GM12878 (cell line): ENCODE measurements at regions of chr18 and their contacts with region 1.

Region 1: GRCh38 chr18:58180738-58181353 is 136.8 kb downstream of the NEDD4L start:
- DNase-seq: no peak
- ATAC-seq: peak; percentile 86
- H3K4me3 ChIP-seq: no peak overlapping the region
- H3K27ac ChIP-seq: no peak overlapping the region
- H3K4me1 ChIP-seq: no peaks in the 10 kb centered on the region
- H3K27me3 ChIP-seq: no peaks in the 10 kb centered on the region
- CTCF ChIP-seq: peak; percentile 78 to 87 (median 78)
- EP300 ChIP-seq: no peak
- POLR2A ChIP-seq: no peak
- RAD21 ChIP-seq: peak; percentile 79

Region 2: GRCh38 chr18:57188851-57189557 is 991.8 kb before region 1 on chr18:
- CTCF ChIA-PET with region 1: no interaction called
- POLR2A ChIA-PET with region 1: no interaction called
- RAD21 ChIA-PET with region 1: no interaction called
- SMC1A ChIA-PET with region 1: no interaction called
- in situ Hi-C with region 1: no loop called
- intact Hi-C with region 1: no loop called
- DNase-seq: no peak
- ATAC-seq: no peak
- H3K4me3 ChIP-seq: no peak overlapping the region
- H3K27ac ChIP-seq: no peak overlapping the region
- H3K4me1 ChIP-seq: no peaks in the 10 kb centered on the region
- H3K27me3 ChIP-seq: no peaks in the 10 kb centered on the region; a peak in 1 of 4 replicates
- CTCF ChIP-seq: no peak
- EP300 ChIP-seq: no peak
- POLR2A ChIP-seq: no peak
- RAD21 ChIP-seq: no peak

Region 3: GRCh38 chr18:57881818-57882413 is 298.9 kb before region 1 on chr18:
- CTCF ChIA-PET with region 1: interaction called, 15 read pairs
- POLR2A ChIA-PET with region 1: no interaction called
- RAD21 ChIA-PET with region 1: interaction called, 10 read pairs
- SMC1A ChIA-PET with region 1: interaction called, 13 read pairs
- in situ Hi-C with region 1: no loop called
- intact Hi-C with region 1: loop called (anchors 2 kb)
- DNase-seq: peak; percentile 32
- ATAC-seq: peak; percentile 98
- H3K4me3 ChIP-seq: no peak overlapping the region
- H3K27ac ChIP-seq: no peak overlapping the region
- H3K4me1 ChIP-seq: no peaks in the 10 kb centered on the region
- H3K27me3 ChIP-seq: no peaks in the 10 kb centered on the region
- CTCF ChIP-seq: peak; percentile 89 to 94 (median 90); a peak in 5 of 6 replicates
- EP300 ChIP-seq: no peak
- POLR2A ChIP-seq: no peak
- RAD21 ChIP-seq: peak; percentile 93

Region 4: GRCh38 chr18:58143386-58143785 is 37.5 kb before region 1 on chr18:
- CTCF ChIA-PET with region 1: interaction called, 10 read pairs
- POLR2A ChIA-PET with region 1: interaction called, 5 read pairs
- RAD21 ChIA-PET with region 1: no interaction called
- SMC1A ChIA-PET with region 1: interaction called, 7 read pairs
- in situ Hi-C with region 1: no loop called
- intact Hi-C with region 1: no loop called
- DNase-seq: no peak
- ATAC-seq: no peak
- H3K4me3 ChIP-seq: no peak overlapping the region
- H3K27ac ChIP-seq: no peak overlapping the region
- H3K4me1 ChIP-seq: no peaks in the 10 kb centered on the region
- H3K27me3 ChIP-seq: no peaks in the 10 kb centered on the region
- CTCF ChIP-seq: no peak
- EP300 ChIP-seq: no peak
- POLR2A ChIP-seq: no peak
- RAD21 ChIP-seq: no peak

Region 5: DNA sequence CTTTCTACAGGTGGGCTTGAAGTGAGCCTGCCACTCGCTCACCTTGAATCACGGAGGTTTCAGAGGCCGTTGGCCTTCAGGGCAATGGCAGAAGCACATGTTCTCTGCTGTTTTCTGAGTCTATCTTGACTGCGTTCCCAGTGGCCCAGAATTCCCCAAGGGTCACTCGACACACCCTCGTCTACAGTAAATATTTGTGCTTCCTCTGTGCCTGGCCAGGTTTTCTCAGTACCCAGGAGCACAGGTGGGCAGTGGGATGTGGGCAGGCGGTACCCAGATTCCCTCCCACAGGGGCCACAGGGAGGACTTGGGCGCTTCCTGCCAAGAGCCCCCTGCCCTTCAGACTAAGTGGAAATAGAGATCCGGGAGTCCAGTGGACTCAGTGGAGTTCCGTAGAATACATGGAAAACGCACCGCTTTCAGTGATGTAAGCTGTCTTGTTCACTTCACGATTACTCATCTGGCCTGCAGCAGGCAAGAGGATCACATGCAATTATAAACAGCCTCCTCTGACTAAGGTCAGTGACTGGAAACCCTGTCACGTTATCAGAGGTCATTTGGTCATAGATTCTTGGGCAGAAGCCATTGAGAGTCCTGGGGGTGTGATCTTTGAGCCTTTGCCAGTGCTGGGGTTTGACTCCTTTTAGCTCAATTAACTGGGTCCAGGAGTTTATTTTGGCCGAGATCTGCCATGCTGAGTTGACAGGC is 43.0 kb after region 1 on chr18:
- CTCF ChIA-PET with region 1: interaction called, 9 read pairs
- POLR2A ChIA-PET with region 1: no interaction called
- RAD21 ChIA-PET with region 1: interaction called, 12 read pairs
- SMC1A ChIA-PET with region 1: interaction called, 10 read pairs
- in situ Hi-C with region 1: no loop called
- intact Hi-C with region 1: no loop called
- DNase-seq: no peak
- ATAC-seq: peak; percentile 47
- H3K4me3 ChIP-seq: no peak overlapping the region
- H3K27ac ChIP-seq: no peak overlapping the region
- H3K4me1 ChIP-seq: peaks cover 13% of the 10 kb centered on the region
- H3K27me3 ChIP-seq: no peaks in the 10 kb centered on the region
- CTCF ChIP-seq: no peak
- EP300 ChIP-seq: no peak
- POLR2A ChIP-seq: no peak
- RAD21 ChIP-seq: no peak

Region 6: GRCh38 chr18:58321986-58322385 is 141.1 kb after region 1 on chr18:
- CTCF ChIA-PET with region 1: interaction called, 20 read pairs
- POLR2A ChIA-PET with region 1: no interaction called
- RAD21 ChIA-PET with region 1: interaction called, 13 read pairs
- SMC1A ChIA-PET with region 1: interaction called, 10 read pairs
- in situ Hi-C with region 1: no loop called
- intact Hi-C with region 1: loop called (anchors 5 kb)
- DNase-seq: no peak
- ATAC-seq: peak; percentile 96
- H3K4me3 ChIP-seq: no peak overlapping the region
- H3K27ac ChIP-seq: no peak overlapping the region
- H3K4me1 ChIP-seq: peaks cover 7% of the 10 kb centered on the region
- H3K27me3 ChIP-seq: no peaks in the 10 kb centered on the region
- CTCF ChIP-seq: peak; percentile 45 to 77 (median 56); a peak in 4 of 6 replicates
- EP300 ChIP-seq: no peak
- POLR2A ChIP-seq: no peak
- RAD21 ChIP-seq: peak; percentile 77